Spleen (tissue), 13 donors: ENCODE measurements at regions of chr2 and their contacts with region 1.

Region 1: GRCh38 chr2:70340921-70341765 is 39.3 kb upstream of the FAM136A start:
- DNase-seq: no peak
- H3K4me3 ChIP-seq: no peak overlapping the region
- H3K27ac ChIP-seq: no peak overlapping the region
- H3K4me1 ChIP-seq: peaks cover 0 to 4% (median 0%) of the 10 kb centered on the region in 6 donors
- H3K27me3 ChIP-seq: peaks cover 0 to 50% (median 5%) of the 10 kb centered on the region in 7 donors
- CTCF ChIP-seq: peak in 10 of 11 experiments; percentile 44 to 85 (median 74)
- POLR2A ChIP-seq: no peak

Region 2: DNA sequence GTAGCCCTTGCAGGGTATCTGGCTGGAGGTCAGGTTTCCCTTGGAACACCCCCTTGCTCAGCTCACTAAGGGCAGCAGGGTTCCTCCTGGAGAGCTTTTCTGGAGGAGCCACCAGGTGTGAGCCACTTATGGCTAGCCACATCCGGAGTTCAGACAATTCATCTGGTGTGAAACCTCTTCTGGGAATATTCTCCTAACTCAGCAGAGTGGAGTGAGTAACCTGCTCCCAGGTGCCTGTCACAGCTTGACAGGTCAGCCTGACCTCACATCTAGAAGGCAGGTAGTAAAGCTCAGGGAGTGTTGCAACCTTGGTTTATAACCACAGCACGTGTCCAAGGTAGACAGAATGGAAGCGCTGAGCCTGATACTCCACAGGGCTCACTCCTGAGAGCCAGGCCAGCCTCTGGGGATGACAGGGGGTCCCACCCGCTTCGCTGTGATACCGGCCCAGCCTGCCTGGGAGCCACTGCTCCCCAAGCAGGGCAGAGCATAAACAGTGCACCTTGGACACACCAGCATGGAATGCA is 275.1 kb after region 1 on chr2:
- intact Hi-C with region 1: loop called (anchors 5 kb)
- DNase-seq: no peak
- H3K4me3 ChIP-seq: no peak overlapping the region
- H3K27ac ChIP-seq: no peak overlapping the region
- H3K4me1 ChIP-seq: no peaks in the 10 kb centered on the region
- H3K27me3 ChIP-seq: peaks cover 0 to 22% (median 0%) of the 10 kb centered on the region in 7 donors
- CTCF ChIP-seq: no peak
- POLR2A ChIP-seq: no peak